Activated naive CD4-positive, alpha-beta T cell treated with anti-CD3 and anti-CD28 coated beads for 36 hours (primary cell): ENCODE measurements at regions of chr11 and their contacts with region 1.

Region 1: DNA sequence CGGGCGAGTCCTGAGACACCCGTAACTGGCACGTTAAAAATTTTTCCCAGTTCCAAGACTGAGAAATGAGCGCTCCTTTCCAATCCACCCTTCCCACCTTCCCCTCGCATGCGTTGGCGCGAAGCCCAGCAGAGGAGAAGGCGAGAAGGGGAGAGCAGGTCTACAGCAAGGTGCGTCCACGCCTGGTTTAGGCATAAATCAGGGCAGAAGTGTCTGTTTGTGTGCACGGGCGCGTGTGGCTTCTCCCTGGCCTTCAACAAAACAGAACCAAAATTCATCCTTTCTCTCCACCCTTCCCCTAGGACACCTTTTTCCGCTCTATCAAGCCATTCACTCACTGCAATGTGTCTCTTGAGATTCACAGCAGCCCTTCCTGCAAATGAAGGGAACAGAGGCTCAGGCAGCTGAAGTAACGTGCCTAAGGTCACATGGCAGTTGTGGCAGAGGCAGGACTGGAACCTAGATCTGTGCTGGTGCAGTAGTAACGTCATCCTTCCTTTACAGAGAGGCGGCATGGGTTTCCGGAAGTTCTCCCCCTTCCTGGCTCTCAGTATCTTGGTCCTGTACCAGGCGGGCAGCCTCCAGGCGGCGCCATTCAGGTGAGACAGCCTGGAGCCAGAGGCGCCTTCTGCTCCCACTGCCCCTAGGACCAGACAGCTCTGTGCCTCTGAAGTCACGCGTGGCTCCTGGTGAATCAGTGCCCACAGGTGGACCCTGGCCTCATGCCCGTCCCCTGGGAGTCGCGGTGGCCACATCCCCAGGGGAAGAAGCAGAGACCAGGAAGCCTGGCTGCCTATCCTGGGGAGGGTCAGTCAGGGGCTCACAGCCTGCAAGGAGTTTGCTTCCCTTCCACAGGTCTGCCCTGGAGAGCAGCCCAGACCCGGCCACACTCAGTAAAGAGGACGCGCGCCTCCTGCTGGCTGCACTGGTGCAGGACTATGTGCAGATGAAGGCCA is 1.1 kb downstream of the CALCB start:
- DNase-seq: peak; percentile 94
- H3K4me3 Mint-ChIP-seq: peak overlapping the region; percentile 86
- H3K27ac Mint-ChIP-seq: peak overlapping the region; percentile 43
- H3K4me1 Mint-ChIP-seq: peaks cover 10% of the 10 kb centered on the region
- H3K27me3 Mint-ChIP-seq: peaks cover 9% of the 10 kb centered on the region

Region 2: GRCh38 chr11:14789879-14790484 is 284.5 kb before region 1 on chr11:
- CTCF ChIA-PET with region 1: interaction called, 5 read pairs
- intact Hi-C with region 1: loop called (anchors 1 kb)
- DNase-seq: no peak
- H3K4me3 Mint-ChIP-seq: no peak overlapping the region
- H3K27ac Mint-ChIP-seq: no peak overlapping the region
- H3K4me1 Mint-ChIP-seq: peaks cover 6% of the 10 kb centered on the region
- H3K27me3 Mint-ChIP-seq: no peaks in the 10 kb centered on the region

Region 3: GRCh38 chr11:15006139-15006759 is 68.2 kb before region 1 on chr11:
- CTCF ChIA-PET with region 1: interaction called, 15 read pairs
- intact Hi-C with region 1: loop called (anchors 1 kb)
- DNase-seq: peak; percentile 10
- H3K4me3 Mint-ChIP-seq: no peak overlapping the region
- H3K27ac Mint-ChIP-seq: no peak overlapping the region
- H3K4me1 Mint-ChIP-seq: no peaks in the 10 kb centered on the region
- H3K27me3 Mint-ChIP-seq: peaks cover 27% of the 10 kb centered on the region

Region 4: DNA sequence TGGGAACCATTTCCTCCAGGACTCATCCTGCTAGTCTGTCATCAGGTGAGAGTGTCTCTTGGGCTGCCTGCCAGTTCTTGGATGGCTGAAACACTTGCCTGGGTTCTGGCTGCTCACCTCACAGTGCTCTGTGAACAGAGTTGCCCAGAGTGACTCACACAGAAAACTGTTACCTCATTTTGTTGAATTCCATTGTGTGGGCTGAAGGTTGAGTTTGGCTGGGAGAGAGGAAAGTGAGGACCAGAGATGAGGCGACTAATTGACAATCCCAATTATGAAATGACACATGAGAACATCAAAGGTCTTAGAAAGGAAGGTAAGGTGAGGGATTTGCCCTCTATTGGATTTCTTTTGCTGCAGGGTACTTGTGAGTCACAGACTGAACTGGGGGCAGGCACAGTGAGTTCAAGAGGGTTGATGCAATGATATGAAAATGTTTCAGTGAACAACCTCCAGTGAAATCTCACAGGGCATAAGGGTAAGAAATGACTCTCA is 21.2 kb before region 1 on chr11:
- CTCF ChIA-PET with region 1: interaction called, 73 read pairs
- intact Hi-C with region 1: loop called (anchors 1 kb)
- DNase-seq: peak; percentile 75
- H3K4me3 Mint-ChIP-seq: no peak overlapping the region
- H3K27ac Mint-ChIP-seq: peak overlapping the region; percentile 83
- H3K4me1 Mint-ChIP-seq: peaks cover 26% of the 10 kb centered on the region
- H3K27me3 Mint-ChIP-seq: peaks cover 2% of the 10 kb centered on the region

Region 5: GRCh38 chr11:15091175-15091574 is 16.7 kb after region 1 on chr11:
- CTCF ChIA-PET with region 1: interaction called, 11 read pairs
- intact Hi-C with region 1: no loop called
- DNase-seq: no peak
- H3K4me3 Mint-ChIP-seq: no peak overlapping the region
- H3K27ac Mint-ChIP-seq: no peak overlapping the region
- H3K4me1 Mint-ChIP-seq: no peaks in the 10 kb centered on the region
- H3K27me3 Mint-ChIP-seq: no peaks in the 10 kb centered on the region